H1 (cell line): ENCODE measurements at regions of chr11 and their contacts with region 1.

Region 1: GRCh38 chr11:95705485-95706124 is 84.0 kb downstream of the FAM76B start:
- DNase-seq: peak; percentile 62 to 88
- H3K4me3 ChIP-seq: no peak overlapping the region
- H3K27ac ChIP-seq: no peak overlapping the region
- H3K4me1 ChIP-seq: 0 out of 7 replicates have a peak, but pooled peaks cover 0 to 2% (median 0%) of the 10 kb centered on the region in 4 experiments
- H3K27me3 ChIP-seq: peaks cover 0 to 1% (median 0%) of the 10 kb centered on the region in 4 experiments; a peak in 1 of 7 replicates
- CTCF ChIP-seq: peak; percentile 78 to 92 (median 90)
- EP300 ChIP-seq: no peak
- POLR2A ChIP-seq: no peak
- RAD21 ChIP-seq: peak; percentile 99

Region 2: DNA sequence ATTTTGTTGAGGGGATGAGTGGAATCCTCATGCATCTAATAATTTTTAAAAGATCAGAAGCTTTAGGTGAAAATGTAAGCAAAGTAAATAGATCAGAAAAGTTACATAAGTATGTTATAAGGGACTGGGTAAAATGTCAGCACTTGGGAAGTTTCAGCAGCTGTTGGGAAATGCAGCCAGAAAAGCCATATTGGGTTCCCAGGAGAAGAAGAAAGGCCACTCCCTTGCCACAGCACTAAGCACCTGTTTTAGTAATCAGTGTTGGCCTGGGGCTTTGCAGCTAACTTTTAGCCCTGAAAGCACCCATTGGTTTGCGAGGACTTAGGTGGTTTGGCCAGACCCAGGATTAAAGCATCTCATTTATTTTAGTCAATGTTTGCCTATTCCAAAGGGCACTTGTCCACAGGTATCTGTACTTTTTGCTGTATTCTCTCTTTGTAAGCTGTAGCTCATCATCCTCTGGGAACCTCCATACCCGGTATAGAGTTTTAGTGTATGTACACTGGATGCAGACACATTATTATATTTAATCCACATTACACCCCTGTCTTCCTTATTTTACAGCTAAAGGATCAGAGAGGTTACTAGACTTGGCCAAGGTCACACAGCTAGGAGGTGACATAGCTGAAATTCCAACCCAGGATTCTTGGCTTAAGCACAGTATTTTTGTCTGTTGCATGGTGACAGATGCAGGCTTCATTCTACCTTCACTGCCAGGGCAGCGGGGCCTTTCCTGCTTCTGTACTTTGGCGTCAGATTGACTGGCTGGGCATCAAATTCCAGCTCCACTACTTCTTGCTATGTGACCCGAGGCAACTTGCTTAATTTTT is 346.9 kb before region 1 on chr11:
- CTCF ChIA-PET with region 1: interaction called, 10 read pairs
- POLR2A ChIA-PET with region 1: no interaction called
- DNase-seq: no peak
- H3K4me3 ChIP-seq: no peak overlapping the region
- H3K27ac ChIP-seq: no peak overlapping the region
- H3K4me1 ChIP-seq: peaks cover 9 to 14% (median 12%) of the 10 kb centered on the region in 4 experiments; a peak in 6 of 7 replicates
- H3K27me3 ChIP-seq: no peaks in the 10 kb centered on the region
- CTCF ChIP-seq: no peak
- EP300 ChIP-seq: no peak
- POLR2A ChIP-seq: no peak
- RAD21 ChIP-seq: no peak

Region 3: DNA sequence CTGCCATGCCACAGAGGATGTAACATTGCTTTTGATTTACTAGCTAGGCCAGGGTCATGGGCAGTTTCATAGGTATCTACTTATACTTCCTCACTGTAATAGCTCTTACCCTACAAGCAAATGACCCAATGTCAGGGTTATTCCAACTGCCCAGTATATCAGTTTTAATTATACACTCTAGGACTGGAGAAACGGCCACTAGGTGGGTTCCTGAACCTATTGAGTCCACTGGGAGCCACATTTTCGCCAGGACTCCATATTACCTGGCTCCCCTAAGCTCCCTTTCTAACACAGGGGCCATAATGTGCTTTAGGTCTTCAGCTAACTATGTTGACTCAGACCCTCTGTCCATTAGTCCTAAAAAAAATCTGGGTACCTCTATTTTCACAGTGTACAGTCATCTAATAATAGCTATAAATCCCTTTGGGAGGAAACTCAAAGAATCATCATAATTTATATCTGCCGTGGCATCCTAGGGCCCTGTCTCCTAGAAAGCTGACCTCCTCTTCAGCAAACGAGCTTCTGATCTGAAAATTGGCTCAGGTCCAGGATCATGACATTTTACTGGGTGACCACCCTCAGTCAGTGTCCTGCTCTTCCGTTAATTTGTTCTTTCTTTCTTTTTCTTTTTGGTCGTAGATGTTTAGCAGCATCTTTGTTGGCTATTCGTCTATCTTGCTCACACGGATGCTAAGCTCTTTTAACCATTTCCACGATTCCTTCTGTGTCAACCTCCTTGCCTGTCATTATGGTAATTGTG is 160.3 kb before region 1 on chr11:
- CTCF ChIA-PET with region 1: interaction called, 24 read pairs
- POLR2A ChIA-PET with region 1: no interaction called
- DNase-seq: no peak
- H3K4me3 ChIP-seq: no peak overlapping the region
- H3K27ac ChIP-seq: no peak overlapping the region
- H3K4me1 ChIP-seq: no peaks in the 10 kb centered on the region
- H3K27me3 ChIP-seq: no peaks in the 10 kb centered on the region
- CTCF ChIP-seq: peak in 2 of 3 experiments; percentile 20 to 34; a peak in 2 of 4 replicates
- EP300 ChIP-seq: no peak
- POLR2A ChIP-seq: no peak
- RAD21 ChIP-seq: peak; percentile 21 to 47; a peak in 3 of 4 replicates

Region 4: DNA sequence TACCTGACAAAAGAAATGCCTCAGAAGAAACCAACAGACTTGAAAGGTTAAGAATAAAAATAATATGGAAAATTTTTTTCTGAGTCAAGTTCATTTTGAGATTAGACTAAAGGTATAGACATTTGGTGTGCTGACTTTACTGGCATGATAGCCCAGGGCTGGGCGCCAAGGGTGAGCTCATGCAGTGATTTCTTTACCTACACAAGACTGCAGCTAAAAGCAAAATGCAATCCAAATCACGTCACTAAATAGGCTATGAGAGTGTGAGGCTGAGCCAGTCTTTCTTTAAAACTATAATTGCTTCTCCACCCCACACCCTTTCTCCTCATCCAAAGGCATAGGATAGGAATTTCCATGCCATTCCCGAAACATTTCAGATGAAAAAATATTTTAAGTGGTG is 112.5 kb before region 1 on chr11:
- CTCF ChIA-PET with region 1: interaction called, 10 read pairs
- POLR2A ChIA-PET with region 1: no interaction called
- DNase-seq: no peak
- H3K4me3 ChIP-seq: no peak overlapping the region
- H3K27ac ChIP-seq: no peak overlapping the region
- H3K4me1 ChIP-seq: peaks cover 0 to 7% (median 2%) of the 10 kb centered on the region in 4 experiments; a peak in 3 of 7 replicates
- H3K27me3 ChIP-seq: no peaks in the 10 kb centered on the region; a peak in 1 of 7 replicates
- CTCF ChIP-seq: no peak
- EP300 ChIP-seq: no peak
- POLR2A ChIP-seq: no peak
- RAD21 ChIP-seq: no peak

Region 5: GRCh38 chr11:95727620-95728019 is 22.0 kb after region 1 on chr11:
- CTCF ChIA-PET with region 1: interaction called, 20 read pairs
- POLR2A ChIA-PET with region 1: no interaction called
- DNase-seq: no peak
- H3K4me3 ChIP-seq: no peak overlapping the region
- H3K27ac ChIP-seq: no peak overlapping the region
- H3K4me1 ChIP-seq: no peaks in the 10 kb centered on the region
- H3K27me3 ChIP-seq: no peaks in the 10 kb centered on the region
- CTCF ChIP-seq: no peak
- EP300 ChIP-seq: no peak
- POLR2A ChIP-seq: no peak
- RAD21 ChIP-seq: no peak